ENCODE measurements at regions of chr3 and their contacts with region 1.

Region 1: GRCh38 chr3:187264021-187264420 is 27.5 kb downstream of the MASP1 start:
- DNase-seq: no peak
- ATAC-seq: peak in 5 of 8 donors; percentile 51 to 62 (median 56)
- H3K4me3 ChIP-seq: no peak overlapping the region
- H3K27ac ChIP-seq: peak overlapping the region; percentile 2 to 89 (median 76)
- H3K4me1 ChIP-seq: peaks cover 14 to 45% (median 34%) of the 10 kb centered on the region in 9 donors
- H3K27me3 ChIP-seq: no peaks in the 10 kb centered on the region
- CTCF ChIP-seq: no peak

Region 2: DNA sequence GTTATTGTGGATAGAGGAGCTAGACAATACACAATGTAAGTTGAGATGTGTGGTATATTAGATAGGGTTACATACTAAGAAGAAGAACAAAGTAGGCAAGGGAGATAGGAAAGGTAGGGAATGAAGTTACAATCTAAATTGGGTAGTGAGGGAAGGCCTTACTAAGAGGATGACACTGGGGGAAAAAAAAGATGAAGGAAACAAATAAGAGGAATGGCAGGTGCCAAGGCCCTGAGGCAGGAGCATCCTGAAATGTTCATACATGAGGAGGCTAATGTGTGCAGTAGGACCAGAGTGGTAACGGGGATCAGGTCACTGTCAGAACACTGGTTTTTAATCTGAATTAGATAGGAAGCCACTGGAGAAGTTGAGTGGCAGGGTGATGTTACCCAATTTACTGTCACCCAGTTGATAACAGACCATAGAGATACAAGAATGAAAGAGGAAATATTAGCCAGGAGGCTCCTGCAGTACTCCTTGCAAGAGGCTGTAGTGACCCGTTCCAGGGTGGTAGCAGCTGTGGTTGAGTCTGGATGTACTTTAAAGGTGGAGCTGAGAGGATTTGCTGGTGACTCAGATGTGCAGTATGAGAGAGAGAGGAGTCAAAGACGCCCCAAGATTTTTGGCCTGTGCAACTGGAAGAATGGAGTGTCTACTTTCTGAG is 52.4 kb before region 1 on chr3:
- intact Hi-C with region 1: no loop called
- DNase-seq: no peak
- ATAC-seq: peak in 4 of 8 donors; percentile 30 to 43 (median 38)
- H3K4me3 ChIP-seq: no peak overlapping the region
- H3K27ac ChIP-seq: peak overlapping the region in 4 of 10 donors; percentile 42 to 79 (median 62)
- H3K4me1 ChIP-seq: peaks cover 5 to 45% (median 27%) of the 10 kb centered on the region in 9 donors
- H3K27me3 ChIP-seq: no peaks in the 10 kb centered on the region
- CTCF ChIP-seq: no peak

Region 3: GRCh38 chr3:187291001-187291511 is 27.0 kb after region 1 on chr3:
- intact Hi-C with region 1: loop called in 1 of 10 experiments (anchors 5 kb)
- DNase-seq: peak in 1 of 2 donors; percentile 17
- ATAC-seq: peak; percentile 23 to 59 (median 44)
- H3K4me3 ChIP-seq: peak overlapping the region; percentile 20 to 65 (median 51)
- H3K27ac ChIP-seq: peak overlapping the region; percentile 57 to 92 (median 84)
- H3K4me1 ChIP-seq: peaks cover 2 to 64% (median 24%) of the 10 kb centered on the region in 9 donors
- H3K27me3 ChIP-seq: peaks cover 0 to 11% (median 0%) of the 10 kb centered on the region in 7 donors
- CTCF ChIP-seq: no peak